OCI-LY7 (cell line): ENCODE measurements at regions of chr17 and their contacts with region 1.

Region 1: DNA sequence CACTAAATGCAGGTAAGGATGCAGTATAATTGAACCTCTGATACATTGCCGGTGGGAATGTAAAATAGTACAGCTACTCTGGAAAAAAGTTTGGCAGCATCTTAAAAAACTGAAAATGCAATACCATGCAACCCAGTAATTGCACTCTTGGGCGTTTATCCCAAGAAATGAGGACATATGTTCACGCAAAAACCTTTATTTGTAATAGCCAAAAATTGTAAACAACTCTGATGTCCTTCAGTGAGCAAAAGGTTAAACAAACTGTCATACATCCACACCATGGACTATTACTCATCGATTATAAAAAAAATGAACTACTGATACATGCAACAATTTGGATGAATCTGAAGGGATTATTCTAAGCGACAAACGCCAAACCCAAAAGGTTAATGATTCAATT is 16.9 kb downstream of the SYNRG start:
- DNase-seq: no peak
- H3K4me3 ChIP-seq: no peak overlapping the region
- H3K27ac ChIP-seq: no peak overlapping the region
- H3K4me1 ChIP-seq: no peaks in the 10 kb centered on the region
- CTCF ChIP-seq: no peak

Region 2: GRCh38 chr17:37574427-37574826 is 17.9 kb before region 1 on chr17:
- CTCF ChIA-PET with region 1: no interaction called
- POLR2A ChIA-PET with region 1: interaction called, 3 read pairs
- intact Hi-C with region 1: loop called (anchors 2 kb)
- DNase-seq: no peak
- H3K4me3 ChIP-seq: no peak overlapping the region
- H3K27ac ChIP-seq: no peak overlapping the region
- H3K4me1 ChIP-seq: no peaks in the 10 kb centered on the region
- CTCF ChIP-seq: no peak

Region 3: GRCh38 chr17:37671824-37672547 is 79.7 kb after region 1 on chr17:
- CTCF ChIA-PET with region 1: no interaction called
- POLR2A ChIA-PET with region 1: no interaction called
- intact Hi-C with region 1: no loop called
- DNase-seq: no peak
- H3K4me3 ChIP-seq: no peak overlapping the region
- H3K27ac ChIP-seq: no peak overlapping the region
- H3K4me1 ChIP-seq: no peaks in the 10 kb centered on the region
- CTCF ChIP-seq: no peak